Activated CD4-positive, alpha-beta T cell treated with anti-CD3 and anti-CD28 coated beads, Interleukin-2, amount 10 ng/mL, durations not matched to agents 24 days and 14 days (primary cell): ENCODE measurements at regions of chr1 and their contacts with region 1.

Region 1: DNA sequence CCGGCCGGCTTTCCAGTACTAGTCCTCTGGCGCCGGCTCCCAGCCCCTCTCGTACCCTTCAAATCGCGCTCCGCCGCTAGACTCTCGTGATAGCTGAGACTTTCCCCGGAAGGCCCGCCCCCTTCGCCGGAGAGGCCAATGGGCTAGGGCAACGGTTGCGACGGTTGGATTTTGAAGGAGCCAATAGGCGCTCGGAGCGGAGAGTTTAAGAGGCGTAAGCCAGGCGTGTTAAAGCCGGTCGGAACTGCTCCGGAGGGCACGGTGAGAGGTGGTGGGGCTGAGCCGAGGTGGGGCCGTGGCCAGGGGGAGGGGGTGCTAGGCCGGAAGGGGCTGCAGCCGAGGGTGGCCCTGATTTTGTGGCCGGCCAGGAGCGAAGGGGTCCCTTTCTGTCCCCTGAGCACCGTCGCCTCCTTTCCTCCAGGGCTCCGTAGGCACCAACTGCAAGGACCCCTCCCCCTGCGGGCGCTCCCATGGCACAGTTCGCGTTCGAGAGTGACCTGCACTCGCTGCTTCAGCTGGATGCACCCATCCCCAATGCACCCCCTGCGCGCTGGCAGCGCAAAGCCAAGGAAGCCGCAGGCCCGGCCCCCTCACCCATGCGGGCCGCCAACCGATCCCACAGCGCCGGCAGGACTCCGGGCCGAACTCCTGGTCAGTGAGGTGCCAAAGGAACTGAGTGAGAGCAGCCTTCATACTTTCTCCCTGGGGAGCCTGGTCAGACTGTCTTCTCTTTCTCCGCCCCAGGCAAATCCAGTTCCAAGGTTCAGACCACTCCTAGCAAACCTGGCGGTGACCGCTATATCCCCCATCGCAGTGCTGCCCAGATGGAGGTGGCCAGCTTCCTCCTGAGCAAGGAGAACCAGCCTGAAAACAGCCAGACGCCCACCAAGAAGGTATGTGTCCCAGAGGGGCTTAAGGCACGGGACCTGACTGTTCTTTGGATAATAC is at the start of gene CDC20:
- DNase-seq: peak; percentile 100
- H3K4me3 Mint-ChIP-seq: peak within 1 kb of the TSS; percentile 98
- H3K27ac Mint-ChIP-seq: peak within 1 kb of the TSS; percentile 92
- H3K4me1 Mint-ChIP-seq: peaks cover 42% of the 10 kb centered on the region
- H3K27me3 Mint-ChIP-seq: no peaks in the 10 kb centered on the region
- total RNA-seq, gene CDC20: 84.3 and 86.9 TPM in 2 replicates

Region 2: GRCh38 chr1:43227143-43227764 is 131.8 kb before region 1 on chr1:
- intact Hi-C with region 1: loop called (anchors 1 kb)
- DNase-seq: peak; percentile 94
- H3K4me3 Mint-ChIP-seq: no peak overlapping the region
- H3K27ac Mint-ChIP-seq: no peak overlapping the region
- H3K4me1 Mint-ChIP-seq: no peaks in the 10 kb centered on the region
- H3K27me3 Mint-ChIP-seq: peaks cover 3% of the 10 kb centered on the region

Region 3: GRCh38 chr1:43296207-43296606 is 62.8 kb before region 1 on chr1:
- intact Hi-C with region 1: loop called (anchors 1 kb)
- DNase-seq: no peak
- H3K4me3 Mint-ChIP-seq: peak overlapping the region; percentile 10
- H3K27ac Mint-ChIP-seq: peak overlapping the region; percentile 74
- H3K4me1 Mint-ChIP-seq: peaks cover 26% of the 10 kb centered on the region
- H3K27me3 Mint-ChIP-seq: no peaks in the 10 kb centered on the region

Region 4: GRCh38 chr1:43389326-43390313 is 30.6 kb after region 1 on chr1 and contains the starts of genes MED8 and SZT2:
- intact Hi-C with region 1: loop called (anchors 2 kb)
- DNase-seq: peak; percentile 99
- H3K4me3 Mint-ChIP-seq: peak within 1 kb of the TSS; percentile 99
- H3K27ac Mint-ChIP-seq: peak within 1 kb of the TSS; percentile 95
- H3K4me1 Mint-ChIP-seq: peaks cover 40% of the 10 kb centered on the region
- H3K27me3 Mint-ChIP-seq: no peaks in the 10 kb centered on the region
- total RNA-seq, gene MED8: 39.6 and 45.1 TPM in 2 replicates
- total RNA-seq, gene SZT2: 54.0 and 56.2 TPM in 2 replicates

Region 5: DNA sequence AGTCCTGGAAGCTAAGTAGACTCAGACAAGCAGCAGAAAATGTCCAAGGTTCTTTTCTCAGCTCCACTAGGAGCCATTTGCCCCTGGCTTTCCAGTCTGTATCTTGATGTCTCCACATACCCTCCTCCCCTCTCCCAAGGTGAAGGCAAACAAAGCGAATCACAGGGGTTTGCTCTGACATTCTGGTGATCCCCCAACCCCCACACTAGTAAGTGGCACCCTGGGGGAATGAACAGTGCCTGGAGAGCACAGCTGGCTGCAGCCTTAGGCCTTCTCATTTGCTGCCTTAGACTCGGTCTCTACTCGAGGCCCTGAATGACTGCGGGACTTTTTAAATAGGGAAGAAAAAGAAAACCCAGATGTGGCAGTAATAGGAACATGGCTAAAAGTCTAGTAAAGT is 980.7 kb after region 1 on chr1:
- intact Hi-C with region 1: no loop called
- DNase-seq: no peak
- H3K4me3 Mint-ChIP-seq: no peak overlapping the region
- H3K27ac Mint-ChIP-seq: no peak overlapping the region
- H3K4me1 Mint-ChIP-seq: no peaks in the 10 kb centered on the region
- H3K27me3 Mint-ChIP-seq: no peaks in the 10 kb centered on the region

Region 6: GRCh38 chr1:44377925-44378784 is 1019.1 kb after region 1 on chr1:
- intact Hi-C with region 1: no loop called
- DNase-seq: peak; percentile 80
- H3K4me3 Mint-ChIP-seq: no peak overlapping the region
- H3K27ac Mint-ChIP-seq: no peak overlapping the region
- H3K4me1 Mint-ChIP-seq: no peaks in the 10 kb centered on the region
- H3K27me3 Mint-ChIP-seq: peaks cover 7% of the 10 kb centered on the region

Region 7: GRCh38 chr1:44631647-44632539 is 1272.9 kb after region 1 on chr1:
- intact Hi-C with region 1: loop called (anchors 5 kb)
- DNase-seq: peak; percentile 97
- H3K4me3 Mint-ChIP-seq: peak overlapping the region; percentile 89
- H3K27ac Mint-ChIP-seq: peak overlapping the region; percentile 98
- H3K4me1 Mint-ChIP-seq: peaks cover 32% of the 10 kb centered on the region
- H3K27me3 Mint-ChIP-seq: no peaks in the 10 kb centered on the region